GM12878 (cell line): ENCODE measurements at regions of chr7 and their contacts with region 1.

Region 1: GRCh38 chr7:137898839-137899721 is 52.3 kb upstream of the DGKI start:
- DNase-seq: peak; percentile 48
- ATAC-seq: peak; percentile 79
- H3K4me3 ChIP-seq: 0 out of 2 replicates have a peak overlapping the region, but pooled peaks have one; percentile 1
- H3K27ac ChIP-seq: peak overlapping the region; percentile 75
- H3K4me1 ChIP-seq: peaks cover 33% of the 10 kb centered on the region
- H3K27me3 ChIP-seq: no peaks in the 10 kb centered on the region
- CTCF ChIP-seq: peak; percentile 88 to 98 (median 98)
- EP300 ChIP-seq: no peak
- POLR2A ChIP-seq: no peak
- RAD21 ChIP-seq: peak; percentile 99

Region 2: DNA sequence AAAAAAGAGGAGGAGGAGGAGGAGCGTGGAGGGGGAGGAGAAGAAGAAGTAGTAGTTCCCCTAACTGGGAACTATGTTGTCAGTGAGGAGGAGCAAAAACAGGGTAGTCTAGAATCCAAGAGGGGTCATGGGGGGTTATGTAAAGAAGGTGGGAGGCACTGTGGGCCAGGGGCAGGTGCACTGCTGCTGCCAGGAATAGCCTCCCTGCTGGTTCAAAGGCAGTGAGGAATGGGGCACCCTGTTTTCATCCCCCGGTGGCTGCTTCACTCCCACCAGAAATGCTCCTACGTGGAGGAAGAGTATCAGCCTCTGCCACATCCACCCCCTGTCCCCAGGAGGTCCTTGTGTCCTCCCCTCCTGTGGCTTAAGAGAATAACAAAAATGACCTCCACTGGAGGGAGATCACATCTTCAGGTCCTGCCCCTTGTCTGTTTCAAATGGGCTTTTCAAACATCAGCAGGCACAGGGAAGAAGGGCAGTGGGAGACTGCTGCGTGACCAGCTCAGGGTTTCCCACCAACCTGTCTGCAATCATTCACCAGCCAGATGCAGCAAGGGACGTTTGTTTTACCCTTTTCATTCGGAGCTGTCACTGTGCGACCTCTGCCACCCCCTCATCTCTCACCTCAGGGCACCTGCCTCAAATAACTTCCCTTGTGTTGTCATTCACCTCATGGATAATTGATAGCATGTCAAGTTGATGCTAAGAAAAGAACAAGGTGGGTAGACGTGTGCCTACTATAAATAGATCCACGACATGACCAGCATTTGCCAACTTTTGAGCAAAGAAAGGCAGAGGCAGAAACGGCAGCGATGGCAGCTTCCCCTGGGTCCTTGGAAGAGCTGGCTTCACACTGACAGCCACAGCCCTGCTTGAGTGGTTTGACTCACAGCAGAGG is 144.9 kb before region 1 on chr7:
- CTCF ChIA-PET with region 1: interaction called, 7 read pairs
- POLR2A ChIA-PET with region 1: interaction called, 5 read pairs
- RAD21 ChIA-PET with region 1: interaction called, 16 read pairs
- SMC1A ChIA-PET with region 1: interaction called, 16 read pairs
- in situ Hi-C with region 1: no loop called
- intact Hi-C with region 1: loop called (anchors 5 kb)
- DNase-seq: peak; percentile 27
- ATAC-seq: peak; percentile 72
- H3K4me3 ChIP-seq: no peak overlapping the region
- H3K27ac ChIP-seq: no peak overlapping the region
- H3K4me1 ChIP-seq: no peaks in the 10 kb centered on the region; the same call in 1 of the 2 replicates
- H3K27me3 ChIP-seq: no peaks in the 10 kb centered on the region; a peak in 1 of 4 replicates
- CTCF ChIP-seq: no peak
- EP300 ChIP-seq: peak; percentile 76 to 92; a peak in 2 of 4 replicates
- POLR2A ChIP-seq: no peak
- RAD21 ChIP-seq: no peak; the same call in 1 of the 2 replicates

Region 3: DNA sequence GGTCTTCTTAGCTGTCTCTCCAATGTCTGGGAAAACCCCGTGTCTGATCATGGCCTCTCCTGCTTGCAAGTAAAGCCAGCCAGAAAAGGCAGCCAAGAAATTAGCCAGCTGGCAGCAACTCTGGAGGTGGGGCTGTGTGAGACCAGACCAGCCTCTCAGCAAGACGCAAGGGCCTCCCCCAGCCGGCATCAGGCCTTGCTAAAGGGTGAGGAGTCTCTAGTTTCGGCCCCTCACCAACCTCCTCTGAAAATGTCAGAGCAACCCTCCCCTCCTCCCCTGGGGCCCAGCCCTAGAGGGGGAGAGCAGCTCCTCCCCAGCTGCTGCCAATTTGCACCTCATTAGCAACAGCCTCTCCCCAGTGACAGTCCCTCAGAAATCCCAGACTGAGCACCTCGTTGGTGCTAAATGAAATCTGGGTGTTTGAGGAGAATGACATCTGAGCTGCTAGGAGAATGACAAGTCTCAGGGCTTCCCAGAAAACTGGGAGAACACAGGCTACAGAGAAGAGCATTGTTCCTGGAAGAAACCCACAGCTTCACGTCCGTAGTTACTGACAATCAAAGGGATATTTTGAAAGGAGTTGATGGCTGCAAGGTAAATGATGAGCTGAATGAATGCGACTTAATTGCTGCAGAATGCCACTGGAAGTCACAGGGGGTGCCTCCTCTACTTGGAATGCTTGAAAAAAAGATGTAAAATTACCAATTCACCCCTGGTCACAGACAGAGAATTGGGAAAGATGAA is 78.2 kb before region 1 on chr7:
- CTCF ChIA-PET with region 1: interaction called, 10 read pairs
- POLR2A ChIA-PET with region 1: interaction called, 9 read pairs
- RAD21 ChIA-PET with region 1: interaction called, 61 read pairs
- SMC1A ChIA-PET with region 1: interaction called, 48 read pairs
- in situ Hi-C with region 1: no loop called
- intact Hi-C with region 1: loop called (anchors 1 kb)
- DNase-seq: no peak
- ATAC-seq: peak; percentile 91
- H3K4me3 ChIP-seq: no peak overlapping the region
- H3K27ac ChIP-seq: no peak overlapping the region
- H3K4me1 ChIP-seq: peaks cover 6% of the 10 kb centered on the region
- H3K27me3 ChIP-seq: no peaks in the 10 kb centered on the region
- CTCF ChIP-seq: no peak
- EP300 ChIP-seq: no peak; a peak in 1 of 4 replicates
- POLR2A ChIP-seq: no peak
- RAD21 ChIP-seq: no peak

Region 4: GRCh38 chr7:137920637-137921399 is 21.7 kb after region 1 on chr7:
- CTCF ChIA-PET with region 1: interaction called, 38 read pairs
- POLR2A ChIA-PET with region 1: interaction called, 3 read pairs
- RAD21 ChIA-PET with region 1: interaction called, 5 read pairs
- SMC1A ChIA-PET with region 1: interaction called, 6 read pairs
- in situ Hi-C with region 1: no loop called
- intact Hi-C with region 1: no loop called
- DNase-seq: no peak
- ATAC-seq: no peak
- H3K4me3 ChIP-seq: no peak overlapping the region
- H3K27ac ChIP-seq: no peak overlapping the region
- H3K4me1 ChIP-seq: peaks cover 30% of the 10 kb centered on the region
- H3K27me3 ChIP-seq: no peaks in the 10 kb centered on the region
- CTCF ChIP-seq: no peak
- EP300 ChIP-seq: no peak
- POLR2A ChIP-seq: no peak
- RAD21 ChIP-seq: no peak

Region 5: DNA sequence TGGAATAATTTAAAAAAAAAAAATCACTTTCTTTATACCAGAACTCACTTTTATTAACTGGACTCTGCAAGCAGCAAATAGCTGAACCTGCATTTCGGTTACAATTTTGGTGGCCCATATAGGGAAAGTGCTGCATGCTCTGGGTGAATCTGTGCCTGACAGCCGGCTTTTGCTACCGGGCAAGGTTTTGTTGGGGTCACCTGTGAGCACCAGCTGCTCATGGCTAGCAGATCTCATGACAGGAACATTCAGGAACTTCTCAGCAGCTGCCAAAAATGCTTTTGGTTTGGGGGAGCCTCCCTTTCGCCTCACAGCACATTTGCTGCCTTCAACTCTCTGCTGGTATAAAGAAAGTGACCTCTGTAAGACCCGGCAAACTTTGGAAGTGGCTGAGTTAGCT is 116.0 kb after region 1 on chr7:
- CTCF ChIA-PET with region 1: interaction called, 704 read pairs
- POLR2A ChIA-PET with region 1: no interaction called
- RAD21 ChIA-PET with region 1: interaction called, 340 read pairs
- SMC1A ChIA-PET with region 1: interaction called, 436 read pairs
- in situ Hi-C with region 1: no loop called
- intact Hi-C with region 1: no loop called
- DNase-seq: no peak
- ATAC-seq: no peak
- H3K4me3 ChIP-seq: no peak overlapping the region
- H3K27ac ChIP-seq: no peak overlapping the region
- H3K4me1 ChIP-seq: no peaks in the 10 kb centered on the region
- H3K27me3 ChIP-seq: no peaks in the 10 kb centered on the region
- CTCF ChIP-seq: no peak
- EP300 ChIP-seq: no peak
- POLR2A ChIP-seq: no peak
- RAD21 ChIP-seq: no peak

Region 6: GRCh38 chr7:138086563-138087270 is 187.6 kb after region 1 on chr7:
- CTCF ChIA-PET with region 1: no interaction called
- POLR2A ChIA-PET with region 1: no interaction called
- RAD21 ChIA-PET with region 1: no interaction called
- SMC1A ChIA-PET with region 1: no interaction called
- in situ Hi-C with region 1: no loop called
- intact Hi-C with region 1: no loop called
- DNase-seq: no peak
- ATAC-seq: no peak
- H3K4me3 ChIP-seq: no peak overlapping the region
- H3K27ac ChIP-seq: no peak overlapping the region
- H3K4me1 ChIP-seq: peaks cover 6% of the 10 kb centered on the region
- H3K27me3 ChIP-seq: no peaks in the 10 kb centered on the region
- CTCF ChIP-seq: no peak
- EP300 ChIP-seq: no peak
- POLR2A ChIP-seq: no peak
- RAD21 ChIP-seq: no peak

Region 7: DNA sequence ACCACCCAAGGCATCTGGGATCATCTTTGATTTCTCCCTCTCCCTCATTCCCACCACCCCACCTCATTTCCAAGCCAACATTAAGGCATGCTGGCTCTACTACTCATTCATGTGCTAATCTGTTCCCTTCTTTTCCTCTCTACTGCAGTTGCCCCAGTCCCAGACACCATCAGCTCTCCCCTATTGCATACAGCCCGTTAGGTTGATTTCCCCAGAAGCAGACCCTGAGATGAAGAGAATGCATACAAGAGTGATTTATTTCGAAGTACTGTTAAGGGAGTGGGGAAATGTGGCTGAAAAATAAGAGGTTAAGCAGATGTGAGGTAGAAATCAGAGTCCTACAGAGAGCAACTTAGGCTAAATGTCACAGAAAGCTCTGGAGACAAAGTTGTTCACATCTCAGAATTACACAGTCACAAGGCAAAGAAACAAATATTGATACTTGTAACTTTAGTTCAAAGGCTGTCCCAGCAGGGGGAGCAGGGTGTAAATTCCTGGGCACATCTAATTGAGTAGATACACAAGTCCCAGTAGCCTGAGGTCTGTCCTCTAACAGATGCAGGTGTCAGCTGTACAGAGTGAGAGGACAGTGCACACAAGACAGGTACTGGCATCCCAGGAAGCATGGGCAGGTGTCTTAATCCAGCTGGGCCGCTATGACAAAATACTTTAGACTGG is 198.1 kb after region 1 on chr7:
- CTCF ChIA-PET with region 1: no interaction called
- POLR2A ChIA-PET with region 1: no interaction called
- RAD21 ChIA-PET with region 1: no interaction called
- SMC1A ChIA-PET with region 1: no interaction called
- in situ Hi-C with region 1: no loop called
- intact Hi-C with region 1: no loop called
- DNase-seq: no peak
- ATAC-seq: peak; percentile 86
- H3K4me3 ChIP-seq: no peak overlapping the region
- H3K27ac ChIP-seq: no peak overlapping the region
- H3K4me1 ChIP-seq: no peaks in the 10 kb centered on the region
- H3K27me3 ChIP-seq: no peaks in the 10 kb centered on the region
- CTCF ChIP-seq: peak; percentile 43 to 57 (median 54)
- EP300 ChIP-seq: no peak
- POLR2A ChIP-seq: no peak
- RAD21 ChIP-seq: peak; percentile 51

Region 8: GRCh38 chr7:138608275-138608674 is 709.2 kb after region 1 on chr7:
- CTCF ChIA-PET with region 1: no interaction called
- POLR2A ChIA-PET with region 1: no interaction called
- RAD21 ChIA-PET with region 1: no interaction called
- SMC1A ChIA-PET with region 1: no interaction called
- in situ Hi-C with region 1: no loop called
- intact Hi-C with region 1: no loop called
- DNase-seq: peak; percentile 2
- ATAC-seq: peak; percentile 78
- H3K4me3 ChIP-seq: no peak overlapping the region
- H3K27ac ChIP-seq: no peak overlapping the region
- H3K4me1 ChIP-seq: no peaks in the 10 kb centered on the region
- H3K27me3 ChIP-seq: no peaks in the 10 kb centered on the region
- CTCF ChIP-seq: no peak
- EP300 ChIP-seq: no peak
- POLR2A ChIP-seq: no peak
- RAD21 ChIP-seq: no peak